ENCODE measurements at regions of chrX and their contacts with region 1.

Region 1: GRCh38 chrX:153214934-153215333 is 35.9 kb downstream of the MAGEA1 start:
- DNase-seq: no peak
- H3K4me3 Mint-ChIP-seq: no peak overlapping the region
- H3K27ac Mint-ChIP-seq: no peak overlapping the region
- H3K4me1 Mint-ChIP-seq: no peaks in the 10 kb centered on the region
- H3K27me3 Mint-ChIP-seq: peaks cover 48% of the 10 kb centered on the region
- CTCF ChIP-seq: no peak

Region 2: DNA sequence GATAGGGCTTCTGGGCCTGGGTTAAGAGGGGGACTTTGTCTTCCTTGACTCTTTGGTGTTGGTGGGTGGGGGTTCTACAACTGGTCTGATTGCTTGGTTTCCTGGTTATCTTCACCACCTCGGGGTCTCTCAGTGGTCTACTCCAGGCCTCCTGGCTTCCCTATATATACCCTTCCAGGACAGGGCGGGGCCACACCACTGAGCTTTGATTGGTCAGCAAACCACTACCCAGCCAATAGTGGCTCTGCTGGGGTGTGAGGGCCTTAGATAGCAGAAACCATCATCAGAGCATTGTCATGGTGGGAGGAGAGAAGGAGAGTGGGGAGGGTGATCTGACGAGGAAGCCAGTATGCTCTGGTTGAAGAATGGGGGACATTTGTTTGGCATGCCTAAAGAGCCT is 50.2 kb before region 1 on chrX:
- CTCF ChIA-PET with region 1: no interaction called
- POLR2A ChIA-PET with region 1: no interaction called
- intact Hi-C with region 1: loop called (anchors 2 kb)
- DNase-seq: no peak
- H3K4me3 Mint-ChIP-seq: no peak overlapping the region
- H3K27ac Mint-ChIP-seq: no peak overlapping the region
- H3K4me1 Mint-ChIP-seq: no peaks in the 10 kb centered on the region
- H3K27me3 Mint-ChIP-seq: peaks cover 30% of the 10 kb centered on the region
- CTCF ChIP-seq: no peak

Region 3: GRCh38 chrX:153200462-153200861 is 14.5 kb before region 1 on chrX:
- CTCF ChIA-PET with region 1: no interaction called
- POLR2A ChIA-PET with region 1: no interaction called
- intact Hi-C with region 1: no loop called
- DNase-seq: no peak
- H3K4me3 Mint-ChIP-seq: no peak overlapping the region
- H3K27ac Mint-ChIP-seq: no peak overlapping the region
- H3K4me1 Mint-ChIP-seq: no peaks in the 10 kb centered on the region
- H3K27me3 Mint-ChIP-seq: peaks cover 60% of the 10 kb centered on the region
- CTCF ChIP-seq: no peak

Region 4: GRCh38 chrX:153226344-153227185 is 11.6 kb after region 1 on chrX:
- CTCF ChIA-PET with region 1: no interaction called
- POLR2A ChIA-PET with region 1: no interaction called
- intact Hi-C with region 1: no loop called
- DNase-seq: peak; percentile 76
- H3K4me3 Mint-ChIP-seq: no peak overlapping the region
- H3K27ac Mint-ChIP-seq: no peak overlapping the region
- H3K4me1 Mint-ChIP-seq: peaks cover 8% of the 10 kb centered on the region
- H3K27me3 Mint-ChIP-seq: peaks cover 25% of the 10 kb centered on the region
- CTCF ChIP-seq: no peak

Region 5: DNA sequence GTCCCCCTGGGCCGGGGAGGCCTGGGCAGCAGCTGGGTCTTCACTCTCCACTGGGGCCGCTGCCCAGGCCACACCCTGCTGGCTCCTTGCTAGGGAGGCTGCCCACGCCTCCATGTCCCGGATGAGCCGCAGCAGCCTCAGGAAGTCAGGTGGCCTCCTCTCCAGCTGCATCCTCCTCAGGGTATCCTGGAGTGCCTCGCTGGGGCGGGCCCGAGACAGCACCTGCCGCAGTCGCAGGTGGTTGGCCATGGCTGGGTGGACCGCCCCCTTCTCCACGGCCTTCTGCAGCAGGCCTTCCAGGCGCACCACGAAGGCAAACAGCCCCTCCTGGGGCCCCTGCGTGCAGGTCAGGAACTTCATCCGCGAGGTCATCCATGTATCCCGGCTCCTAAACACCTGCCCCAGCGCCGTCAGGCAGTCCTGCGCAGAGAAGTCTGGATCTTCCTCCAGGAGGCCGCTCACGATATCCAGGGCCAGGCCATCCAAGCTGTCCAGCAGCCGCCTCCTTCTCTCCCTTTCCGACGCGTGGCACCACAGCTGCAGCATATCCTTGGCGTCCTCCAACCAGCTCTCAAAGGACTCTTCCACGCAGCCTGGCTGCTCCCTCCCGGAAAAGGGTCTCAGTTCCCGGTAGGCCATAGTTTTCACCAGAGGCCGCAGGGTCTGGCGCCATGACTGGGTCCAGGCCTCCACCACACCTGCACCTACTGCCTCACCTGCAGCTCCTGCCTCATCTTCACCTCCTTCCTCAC is 104.5 kb after region 1 on chrX:
- CTCF ChIA-PET with region 1: no interaction called
- POLR2A ChIA-PET with region 1: no interaction called
- intact Hi-C with region 1: no loop called
- DNase-seq: no peak
- H3K4me3 Mint-ChIP-seq: no peak overlapping the region
- H3K27ac Mint-ChIP-seq: no peak overlapping the region
- H3K4me1 Mint-ChIP-seq: no peaks in the 10 kb centered on the region
- H3K27me3 Mint-ChIP-seq: peaks cover 17% of the 10 kb centered on the region
- CTCF ChIP-seq: no peak

Measured in MCF 10A (cell line).